ENCODE measurements at regions of chr6 and their contacts with region 1.

Region 1: DNA sequence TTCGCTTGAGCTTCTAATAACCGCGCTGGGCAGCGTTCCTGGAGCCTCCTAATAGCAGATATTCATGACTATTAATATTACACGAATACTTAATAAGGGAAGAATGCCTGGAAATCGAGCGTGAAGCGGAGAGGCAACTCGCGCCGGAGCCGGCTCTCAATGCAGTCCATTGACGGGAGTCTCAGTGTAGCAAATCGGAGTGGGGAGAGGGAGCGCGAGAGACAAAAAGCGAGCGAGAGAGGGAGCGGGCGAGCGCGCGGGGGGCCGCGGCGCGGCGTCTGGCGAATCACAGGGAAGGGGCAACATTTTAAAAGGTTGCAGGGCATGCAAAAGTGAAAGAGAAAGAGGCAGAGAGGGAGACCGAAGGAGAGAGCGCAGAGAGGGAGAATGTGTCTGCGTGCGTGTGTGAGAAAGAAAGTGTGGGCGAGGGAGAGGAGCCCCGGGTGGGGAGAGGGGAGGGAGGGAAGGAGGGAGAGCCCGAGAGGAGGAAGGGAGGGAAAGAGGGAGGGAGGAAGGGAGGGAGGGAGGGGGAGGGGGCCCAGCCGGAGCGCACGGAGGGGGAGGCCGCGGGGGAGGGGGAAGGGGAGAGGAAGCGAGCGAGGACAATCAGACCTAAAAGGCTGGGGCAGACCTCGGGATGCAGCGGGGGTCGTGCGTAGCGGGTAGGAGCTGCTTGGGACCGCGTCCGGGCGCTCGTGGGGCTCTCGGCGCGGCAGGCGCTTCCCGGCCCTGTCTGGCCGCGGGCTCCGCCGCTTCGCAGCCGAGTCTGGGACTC is 2.7 kb downstream of the TFAP2A start:
- DNase-seq: peak; percentile 94
- H3K4me3 Mint-ChIP-seq: peak overlapping the region; percentile 94
- H3K27ac Mint-ChIP-seq: peak overlapping the region; percentile 99
- H3K4me1 Mint-ChIP-seq: peaks cover 12% of the 10 kb centered on the region
- H3K27me3 Mint-ChIP-seq: no peaks in the 10 kb centered on the region
- CTCF ChIP-seq: no peak

Region 2: GRCh38 chr6:9250852-9251251 is 1161.3 kb before region 1 on chr6:
- CTCF ChIA-PET with region 1: interaction called, 14 read pairs
- POLR2A ChIA-PET with region 1: interaction called, 11 read pairs
- intact Hi-C with region 1: loop called (anchors 2 kb)
- DNase-seq: peak; percentile 78
- H3K4me3 Mint-ChIP-seq: no peak overlapping the region
- H3K27ac Mint-ChIP-seq: no peak overlapping the region
- H3K4me1 Mint-ChIP-seq: no peaks in the 10 kb centered on the region
- H3K27me3 Mint-ChIP-seq: no peaks in the 10 kb centered on the region
- CTCF ChIP-seq: peak; percentile 69

Region 3: GRCh38 chr6:9646342-9647067 is 765.7 kb before region 1 on chr6:
- CTCF ChIA-PET with region 1: interaction called, 4 read pairs
- POLR2A ChIA-PET with region 1: interaction called, 25 read pairs
- intact Hi-C with region 1: loop called (anchors 10 kb)
- DNase-seq: peak; percentile 92
- H3K4me3 Mint-ChIP-seq: no peak overlapping the region
- H3K27ac Mint-ChIP-seq: peak overlapping the region; percentile 32
- H3K4me1 Mint-ChIP-seq: peaks cover 23% of the 10 kb centered on the region
- H3K27me3 Mint-ChIP-seq: no peaks in the 10 kb centered on the region
- CTCF ChIP-seq: no peak

Region 4: DNA sequence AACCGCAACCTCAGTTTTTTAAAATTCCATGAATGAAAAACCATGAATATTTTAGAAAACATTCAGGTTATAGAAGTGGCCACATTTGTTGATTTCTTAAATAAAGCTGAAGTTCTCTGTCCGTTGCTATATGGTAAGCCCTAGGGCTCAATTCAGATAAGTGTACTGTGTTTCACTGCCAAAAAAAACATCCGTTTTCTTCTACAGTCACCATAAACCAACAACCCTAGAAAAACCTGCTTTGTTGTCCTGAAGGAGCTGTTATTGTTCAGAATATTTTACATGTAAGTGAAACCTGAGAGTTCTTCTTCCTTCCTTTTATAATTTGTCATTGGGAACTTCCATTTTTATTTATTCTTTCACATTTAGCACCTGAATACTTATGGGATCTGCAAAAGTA is 271.3 kb before region 1 on chr6:
- CTCF ChIA-PET with region 1: interaction called, 4 read pairs
- POLR2A ChIA-PET with region 1: interaction called, 20 read pairs
- intact Hi-C with region 1: no loop called
- DNase-seq: peak; percentile 68
- H3K4me3 Mint-ChIP-seq: peak overlapping the region; percentile 12
- H3K27ac Mint-ChIP-seq: peak overlapping the region; percentile 74
- H3K4me1 Mint-ChIP-seq: peaks cover 44% of the 10 kb centered on the region
- H3K27me3 Mint-ChIP-seq: no peaks in the 10 kb centered on the region
- CTCF ChIP-seq: no peak

Region 5: GRCh38 chr6:10355115-10355702 is 56.9 kb before region 1 on chr6:
- CTCF ChIA-PET with region 1: no interaction called
- POLR2A ChIA-PET with region 1: no interaction called
- intact Hi-C with region 1: no loop called
- DNase-seq: peak; percentile 60
- H3K4me3 Mint-ChIP-seq: no peak overlapping the region
- H3K27ac Mint-ChIP-seq: peak overlapping the region; percentile 59
- H3K4me1 Mint-ChIP-seq: peaks cover 6% of the 10 kb centered on the region
- H3K27me3 Mint-ChIP-seq: no peaks in the 10 kb centered on the region
- CTCF ChIP-seq: no peak

Region 6: DNA sequence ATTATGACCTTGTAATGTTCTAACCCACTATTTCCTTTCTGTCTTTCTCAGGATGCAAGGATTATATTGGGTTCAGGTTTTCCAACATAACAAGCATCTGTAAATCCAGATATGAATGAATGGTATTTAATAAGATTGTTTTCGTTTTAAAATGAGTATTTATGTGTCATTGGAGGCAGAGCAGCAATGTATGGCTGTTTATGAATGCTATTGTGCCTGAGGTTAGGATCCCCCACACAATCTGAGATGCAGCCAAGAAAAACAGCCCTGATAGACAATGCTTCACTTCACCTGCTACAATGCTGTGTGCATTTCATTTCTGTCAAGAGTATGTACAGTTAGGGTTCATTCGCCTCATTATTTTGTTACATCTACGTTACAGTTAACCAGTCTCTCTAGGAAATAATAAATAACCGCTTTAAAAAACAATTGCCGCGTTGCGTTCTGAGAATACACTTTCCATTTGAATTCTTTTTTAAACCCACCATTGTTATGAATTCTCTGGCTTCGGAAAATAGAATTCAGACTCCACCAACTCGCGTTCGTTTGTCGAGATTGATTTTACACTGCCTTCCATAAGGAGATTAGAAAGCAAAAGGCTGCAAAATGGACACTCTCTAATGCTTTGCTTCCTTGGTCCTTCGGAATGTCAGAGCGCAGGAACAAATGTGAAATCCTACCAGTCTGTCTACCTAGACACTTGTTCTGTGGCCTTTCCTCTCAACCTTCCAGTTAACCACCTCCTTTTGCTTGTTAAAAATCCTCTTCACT is 16.8 kb before region 1 on chr6:
- CTCF ChIA-PET with region 1: interaction called, 5 read pairs
- POLR2A ChIA-PET with region 1: interaction called, 116 read pairs
- intact Hi-C with region 1: no loop called
- DNase-seq: peak; percentile 38
- H3K4me3 Mint-ChIP-seq: no peak overlapping the region
- H3K27ac Mint-ChIP-seq: no peak overlapping the region
- H3K4me1 Mint-ChIP-seq: peaks cover 28% of the 10 kb centered on the region
- H3K27me3 Mint-ChIP-seq: no peaks in the 10 kb centered on the region
- CTCF ChIP-seq: no peak

Region 7: DNA sequence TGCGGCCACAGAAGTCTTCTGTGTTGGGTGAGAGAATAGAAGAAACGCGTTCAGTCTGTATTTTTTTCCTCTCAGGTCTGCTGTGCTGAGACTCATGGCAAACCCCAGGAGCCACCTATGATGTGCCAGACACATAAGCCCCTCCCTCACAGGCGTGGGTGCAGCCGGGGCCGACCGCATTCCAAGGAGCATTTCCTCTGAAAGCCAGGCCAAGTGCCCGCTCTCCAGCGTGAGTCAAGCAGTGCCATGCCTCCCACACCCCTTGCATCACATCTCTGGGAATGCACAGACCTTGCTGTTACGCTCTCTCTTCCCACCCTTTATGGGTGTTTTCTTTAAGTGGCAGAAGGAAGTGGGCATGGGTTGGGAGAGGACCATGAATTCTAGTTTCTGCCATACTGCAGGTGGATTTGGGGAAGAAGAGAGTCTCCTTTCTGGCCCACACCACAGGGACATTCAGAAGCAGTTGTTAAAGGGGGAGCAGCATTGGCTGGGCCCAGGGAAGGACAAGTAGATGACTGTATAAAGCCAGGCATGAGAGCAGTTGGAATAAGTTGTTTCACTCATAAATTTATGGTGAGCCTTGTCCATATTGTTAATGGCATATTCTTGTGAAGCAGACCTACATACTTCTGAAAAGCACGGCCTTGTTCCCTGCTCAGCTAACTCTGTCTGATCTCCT is 39.8 kb after region 1 on chr6:
- CTCF ChIA-PET with region 1: no interaction called
- POLR2A ChIA-PET with region 1: interaction called, 19 read pairs
- intact Hi-C with region 1: no loop called
- DNase-seq: peak; percentile 99
- H3K4me3 Mint-ChIP-seq: peak overlapping the region; percentile 56
- H3K27ac Mint-ChIP-seq: peak overlapping the region; percentile 99
- H3K4me1 Mint-ChIP-seq: peaks cover 34% of the 10 kb centered on the region
- H3K27me3 Mint-ChIP-seq: no peaks in the 10 kb centered on the region
- CTCF ChIP-seq: no peak

Measured in MCF 10A (cell line).